MCF 10A (cell line): ENCODE measurements at regions of chr14 and their contacts with region 1.

Region 1: DNA sequence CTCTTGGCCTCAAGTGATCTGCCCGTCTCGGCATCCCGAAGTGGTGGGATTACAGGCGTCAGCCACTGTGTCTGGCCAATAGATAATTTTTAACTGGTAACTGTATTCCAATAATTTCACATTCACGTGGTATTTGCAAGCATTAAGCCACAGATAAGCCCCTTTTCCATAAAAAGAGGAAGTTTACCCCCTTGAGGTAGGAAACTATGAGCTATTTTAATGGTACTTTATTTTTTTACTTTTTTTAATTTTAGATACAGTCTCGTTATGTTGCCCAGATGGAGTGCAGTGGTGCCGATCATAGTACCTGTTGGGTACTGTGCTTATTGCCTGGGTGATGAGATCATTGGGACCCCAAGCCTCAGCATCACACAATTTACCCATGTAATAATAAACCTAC is 42.9 kb upstream of the AP4S1 start:
- DNase-seq: no peak
- H3K4me3 Mint-ChIP-seq: no peak overlapping the region
- H3K27ac Mint-ChIP-seq: no peak overlapping the region
- H3K4me1 Mint-ChIP-seq: peaks cover 6% of the 10 kb centered on the region
- H3K27me3 Mint-ChIP-seq: no peaks in the 10 kb centered on the region
- CTCF ChIP-seq: no peak

Region 2: GRCh38 chr14:30462358-30462757 is 520.2 kb before region 1 on chr14:
- CTCF ChIA-PET with region 1: no interaction called
- POLR2A ChIA-PET with region 1: no interaction called
- intact Hi-C with region 1: no loop called
- DNase-seq: no peak
- H3K4me3 Mint-ChIP-seq: no peak overlapping the region
- H3K27ac Mint-ChIP-seq: no peak overlapping the region
- H3K4me1 Mint-ChIP-seq: no peaks in the 10 kb centered on the region
- H3K27me3 Mint-ChIP-seq: peaks cover 45% of the 10 kb centered on the region
- CTCF ChIP-seq: no peak

Region 3: GRCh38 chr14:31026395-31027118 is 44.0 kb after region 1 on chr14:
- CTCF ChIA-PET with region 1: interaction called, 11 read pairs
- POLR2A ChIA-PET with region 1: interaction called, 8 read pairs
- intact Hi-C with region 1: loop called (anchors 2 kb)
- DNase-seq: peak; percentile 96
- H3K4me3 Mint-ChIP-seq: peak overlapping the region; percentile 94
- H3K27ac Mint-ChIP-seq: peak overlapping the region; percentile 98
- H3K4me1 Mint-ChIP-seq: peaks cover 32% of the 10 kb centered on the region
- H3K27me3 Mint-ChIP-seq: no peaks in the 10 kb centered on the region
- CTCF ChIP-seq: no peak

Region 4: GRCh38 chr14:31070431-31070830 is 87.9 kb after region 1 on chr14:
- CTCF ChIA-PET with region 1: interaction called, 14 read pairs
- POLR2A ChIA-PET with region 1: no interaction called
- intact Hi-C with region 1: no loop called
- DNase-seq: no peak
- H3K4me3 Mint-ChIP-seq: no peak overlapping the region
- H3K27ac Mint-ChIP-seq: no peak overlapping the region
- H3K4me1 Mint-ChIP-seq: no peaks in the 10 kb centered on the region
- H3K27me3 Mint-ChIP-seq: no peaks in the 10 kb centered on the region
- CTCF ChIP-seq: no peak

Region 5: GRCh38 chr14:31090883-31091764 is 108.6 kb after region 1 on chr14:
- CTCF ChIA-PET with region 1: interaction called, 26 read pairs
- POLR2A ChIA-PET with region 1: interaction called, 5 read pairs
- intact Hi-C with region 1: no loop called
- DNase-seq: peak; percentile 86
- H3K4me3 Mint-ChIP-seq: no peak overlapping the region
- H3K27ac Mint-ChIP-seq: peak overlapping the region; percentile 96
- H3K4me1 Mint-ChIP-seq: peaks cover 12% of the 10 kb centered on the region
- H3K27me3 Mint-ChIP-seq: no peaks in the 10 kb centered on the region
- CTCF ChIP-seq: no peak